Sigmoid colon (tissue), 7 donors: ENCODE measurements at regions of chr11 and their contacts with region 1.

Region 1: GRCh38 chr11:75532200-75533048 is 6.7 kb upstream of the GDPD5 start:
- DNase-seq: peak; percentile 80
- H3K4me3 ChIP-seq: no peak overlapping the region
- H3K27ac ChIP-seq: no peak overlapping the region
- H3K4me1 ChIP-seq: no peaks in the 10 kb centered on the region
- H3K27me3 ChIP-seq: no peaks in the 10 kb centered on the region
- CTCF ChIP-seq: peak; percentile 67 to 95 (median 93)
- EP300 ChIP-seq: no peak
- POLR2A ChIP-seq: no peak

Region 2: GRCh38 chr11:75445315-75445953 is 87.0 kb before region 1 on chr11:
- intact Hi-C with region 1: loop called (anchors 1 kb)
- DNase-seq: peak; percentile 81
- H3K4me3 ChIP-seq: no peak overlapping the region
- H3K27ac ChIP-seq: no peak overlapping the region
- H3K4me1 ChIP-seq: no peaks in the 10 kb centered on the region
- H3K27me3 ChIP-seq: no peaks in the 10 kb centered on the region
- CTCF ChIP-seq: peak; percentile 93 to 99 (median 94)
- EP300 ChIP-seq: no peak
- POLR2A ChIP-seq: no peak

Region 3: DNA sequence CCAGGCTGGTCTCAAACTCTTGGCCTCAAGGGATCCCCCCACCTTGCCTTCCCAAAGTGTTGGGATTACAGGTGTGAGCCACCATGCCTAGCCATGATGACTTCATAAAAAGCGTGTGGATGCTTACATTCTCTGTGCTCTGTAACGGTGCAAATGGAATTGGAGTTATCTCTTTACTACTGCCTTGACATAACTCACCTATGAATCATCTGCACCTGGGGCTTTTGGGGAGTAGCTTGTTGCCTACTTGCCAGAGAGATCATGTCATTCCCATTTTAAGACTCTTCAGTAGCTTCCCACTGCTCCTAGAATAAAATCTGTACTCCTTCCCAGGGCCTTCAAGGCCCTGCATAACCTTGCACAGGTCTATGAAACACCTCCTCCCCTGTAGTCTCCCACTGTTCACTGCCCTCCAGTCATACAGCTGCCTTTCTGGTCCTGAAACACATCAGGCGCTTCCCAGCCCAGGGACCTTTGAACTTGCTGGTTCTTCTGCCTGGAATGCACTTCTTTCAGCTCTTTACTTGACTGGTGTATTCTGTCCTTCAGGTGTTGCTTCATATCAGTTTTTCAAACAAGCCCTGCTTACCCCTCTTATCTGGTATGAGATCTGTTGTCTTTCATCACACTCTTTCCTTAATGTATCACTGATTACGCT is 165.6 kb after region 1 on chr11:
- intact Hi-C with region 1: no loop called
- DNase-seq: no peak
- H3K4me3 ChIP-seq: no peak overlapping the region
- H3K27ac ChIP-seq: no peak overlapping the region
- H3K4me1 ChIP-seq: peaks cover 0 to 5% (median 0%) of the 10 kb centered on the region in 4 donors
- H3K27me3 ChIP-seq: no peaks in the 10 kb centered on the region
- CTCF ChIP-seq: no peak
- EP300 ChIP-seq: no peak
- POLR2A ChIP-seq: no peak